ENCODE measurements at regions of chr10 and their contacts with region 1.

Region 1: DNA sequence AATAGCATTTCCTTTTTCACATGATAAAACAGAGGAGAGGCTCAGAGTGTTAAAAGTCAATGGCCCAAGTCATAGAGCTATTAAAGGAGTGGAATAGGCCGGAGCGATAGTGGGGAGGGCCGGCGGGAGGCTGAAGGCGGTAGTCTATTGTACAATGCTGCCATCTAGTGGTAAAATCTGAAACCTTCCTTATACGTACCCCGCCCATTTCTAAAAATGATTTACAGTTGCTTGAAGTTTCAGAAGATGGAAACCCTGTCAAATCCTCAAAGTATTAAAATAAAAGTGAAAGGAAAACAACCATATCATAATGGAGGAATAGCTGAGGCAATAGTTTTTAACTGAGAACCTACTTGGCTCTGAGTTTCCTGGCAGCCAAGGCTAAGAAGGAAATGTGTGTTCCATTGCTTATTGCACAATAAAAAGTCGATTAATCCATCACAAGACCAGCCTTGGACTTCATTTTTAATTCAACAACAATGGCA is 209.1 kb downstream of the CCSER2 start:
- DNase-seq: peak; percentile 49
- H3K4me3 ChIP-seq: no peak overlapping the region
- H3K27ac ChIP-seq: no peak overlapping the region
- H3K4me1 ChIP-seq: peaks cover 0 to 10% (median 7%) of the 10 kb centered on the region in 4 donors
- H3K27me3 ChIP-seq: peaks cover 10% of the 10 kb centered on the region
- CTCF ChIP-seq: peak; percentile 82 to 86 (median 83)
- EP300 ChIP-seq: no peak
- POLR2A ChIP-seq: no peak

Region 2: DNA sequence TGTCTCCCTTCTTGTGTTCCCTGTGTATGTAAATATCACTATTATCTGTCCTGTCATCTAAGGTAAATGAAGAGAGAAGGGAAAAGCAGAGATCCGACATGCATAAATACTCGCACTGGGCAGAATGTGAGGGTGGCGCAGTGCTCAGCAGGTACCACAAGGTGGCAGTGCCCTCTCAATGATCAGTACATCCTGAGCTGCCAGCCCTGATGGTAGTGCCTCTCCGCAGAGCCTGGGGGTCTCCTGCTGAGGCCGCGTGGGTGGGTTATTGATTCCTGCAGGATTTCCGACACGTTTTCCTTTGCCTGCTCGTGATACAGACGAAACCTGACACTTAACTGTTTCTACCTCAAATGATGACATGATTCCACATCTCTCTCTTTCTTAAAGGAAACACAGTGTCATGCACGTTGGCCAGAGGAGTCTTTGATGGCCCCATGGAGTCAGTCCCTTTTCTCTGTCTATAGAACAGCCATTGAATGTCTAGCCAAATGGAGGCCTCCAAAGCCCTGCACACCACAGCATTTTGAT is 272.8 kb before region 1 on chr10:
- in situ Hi-C with region 1: loop called (anchors 5 to 10 kb)
- intact Hi-C with region 1: loop called (anchors 5 kb)
- DNase-seq: peak; percentile 70
- H3K4me3 ChIP-seq: no peak overlapping the region
- H3K27ac ChIP-seq: no peak overlapping the region
- H3K4me1 ChIP-seq: no peaks in the 10 kb centered on the region
- H3K27me3 ChIP-seq: no peaks in the 10 kb centered on the region
- CTCF ChIP-seq: peak; percentile 87 to 93 (median 91)
- EP300 ChIP-seq: no peak
- POLR2A ChIP-seq: no peak

Region 3: GRCh38 chr10:84375011-84375410 is 162.5 kb before region 1 on chr10:
- in situ Hi-C with region 1: loop called (anchors 5 to 25 kb)
- intact Hi-C with region 1: loop called (anchors 2 kb)
- DNase-seq: no peak
- H3K4me3 ChIP-seq: no peak overlapping the region
- H3K27ac ChIP-seq: no peak overlapping the region
- H3K4me1 ChIP-seq: peaks cover 0 to 5% (median 1%) of the 10 kb centered on the region in 4 donors
- H3K27me3 ChIP-seq: no peaks in the 10 kb centered on the region
- CTCF ChIP-seq: peak; percentile 53 to 69 (median 65)
- EP300 ChIP-seq: no peak
- POLR2A ChIP-seq: no peak

Region 4: GRCh38 chr10:84743483-84743882 is 206.0 kb after region 1 on chr10:
- in situ Hi-C with region 1: no loop called
- intact Hi-C with region 1: loop called (anchors 5 kb)
- DNase-seq: no peak
- H3K4me3 ChIP-seq: no peak overlapping the region
- H3K27ac ChIP-seq: no peak overlapping the region
- H3K4me1 ChIP-seq: no peaks in the 10 kb centered on the region
- H3K27me3 ChIP-seq: no peaks in the 10 kb centered on the region
- CTCF ChIP-seq: peak in 2 of 5 experiments; percentile 29 to 35
- EP300 ChIP-seq: no peak
- POLR2A ChIP-seq: no peak